ENCODE measurements at regions of chr17 and their contacts with region 1.

Region 1: GRCh38 chr17:75344666-75345065 is 55.4 kb upstream of the SLC25A19 start:
- DNase-seq: no peak
- H3K4me3 ChIP-seq: no peak overlapping the region
- H3K27ac ChIP-seq: no peak overlapping the region
- H3K4me1 ChIP-seq: no peaks in the 10 kb centered on the region
- H3K27me3 ChIP-seq: no peaks in the 10 kb centered on the region
- CTCF ChIP-seq: no peak

Region 2: DNA sequence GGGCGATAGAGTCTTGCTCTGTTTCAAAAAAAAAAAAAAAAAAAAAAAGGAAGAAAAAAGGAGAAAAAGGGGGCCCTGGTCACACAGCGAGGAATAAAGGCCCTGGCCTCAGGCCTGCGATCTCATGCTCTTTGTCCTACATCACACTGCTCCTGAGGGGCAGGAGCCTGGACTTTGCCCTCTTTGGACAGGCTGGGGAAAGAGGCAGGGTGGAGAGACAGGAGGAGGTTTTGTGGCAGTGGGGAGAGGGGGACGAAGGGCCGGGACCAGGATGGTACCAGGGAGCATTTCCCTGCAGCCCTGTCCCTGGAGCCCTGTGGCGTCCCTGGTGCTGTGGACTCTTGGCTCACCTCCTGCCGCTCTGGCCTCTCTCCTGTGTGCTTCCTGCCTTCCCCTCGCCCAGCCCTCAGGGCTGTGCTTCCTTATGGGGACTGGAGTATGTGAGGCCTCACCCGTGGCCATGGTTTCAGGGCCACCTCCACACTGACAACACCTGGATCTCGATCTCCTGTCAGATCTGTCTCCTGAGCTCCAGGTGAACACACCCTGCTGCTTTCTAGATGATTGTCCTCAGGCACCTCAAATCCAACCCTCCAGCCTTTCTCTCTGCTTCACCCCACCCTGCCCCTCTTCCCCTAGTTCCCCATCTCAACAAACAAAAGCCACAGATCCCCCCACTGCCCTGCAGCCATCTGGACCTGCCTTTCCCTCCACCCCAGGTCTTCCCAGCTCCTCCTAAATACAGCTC is 35.5 kb before region 1 on chr17:
- CTCF ChIA-PET with region 1: no interaction called
- dilution Hi-C with region 1: no loop called
- in situ Hi-C with region 1: no loop called
- intact Hi-C with region 1: no loop called
- DNase-seq: no peak
- H3K4me3 ChIP-seq: no peak overlapping the region
- H3K27ac ChIP-seq: no peak overlapping the region
- H3K4me1 ChIP-seq: no peaks in the 10 kb centered on the region
- H3K27me3 ChIP-seq: no peaks in the 10 kb centered on the region
- CTCF ChIP-seq: no peak

Region 3: GRCh38 chr17:75371339-75371738 is 26.7 kb after region 1 on chr17:
- CTCF ChIA-PET with region 1: no interaction called
- dilution Hi-C with region 1: loop called (anchors 5 kb)
- in situ Hi-C with region 1: no loop called
- intact Hi-C with region 1: no loop called
- DNase-seq: no peak
- H3K4me3 ChIP-seq: no peak overlapping the region
- H3K27ac ChIP-seq: no peak overlapping the region
- H3K4me1 ChIP-seq: no peaks in the 10 kb centered on the region
- H3K27me3 ChIP-seq: no peaks in the 10 kb centered on the region
- CTCF ChIP-seq: no peak